PC-3 (cell line): ENCODE measurements at regions of chr18 and their contacts with region 1.

Region 1: DNA sequence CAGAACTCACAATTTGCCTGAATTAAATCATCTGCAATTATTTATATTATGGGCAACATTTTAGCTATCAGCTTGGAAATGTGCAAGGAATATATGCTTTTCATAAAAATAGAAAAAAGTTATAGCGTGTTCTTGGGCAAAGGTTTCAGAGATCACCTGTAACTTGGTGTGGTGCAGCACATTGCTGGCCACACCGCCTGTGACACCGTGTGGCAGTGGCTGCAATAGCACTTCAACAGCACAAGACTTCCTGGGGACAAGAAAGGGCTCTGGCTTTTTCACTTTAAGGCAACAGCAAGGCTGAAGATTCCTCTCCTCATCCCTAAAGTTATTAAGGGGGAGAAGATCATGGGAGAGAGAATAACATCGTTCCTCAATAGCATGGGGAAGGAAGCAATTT is 14.8 kb upstream of the SERPINB3 start:
- DNase-seq: peak; percentile 71
- ATAC-seq: peak; percentile 70
- H3K4me3 ChIP-seq: no peak overlapping the region
- H3K27ac ChIP-seq: peak overlapping the region; percentile 73
- H3K4me1 ChIP-seq: peaks cover 37% of the 10 kb centered on the region
- H3K27me3 ChIP-seq: no peaks in the 10 kb centered on the region
- CTCF ChIP-seq: peak; percentile 88

Region 2: GRCh38 chr18:63518178-63519012 is 158.1 kb before region 1 on chr18:
- CTCF ChIA-PET with region 1: interaction called, 12 read pairs
- POLR2A ChIA-PET with region 1: interaction called, 4 read pairs
- intact Hi-C with region 1: loop called (anchors 1 kb)
- DNase-seq: peak; percentile 91
- ATAC-seq: peak; percentile 97
- H3K4me3 ChIP-seq: no peak overlapping the region
- H3K27ac ChIP-seq: no peak overlapping the region
- H3K4me1 ChIP-seq: peaks cover 8% of the 10 kb centered on the region; the same call in 1 of the 2 replicates
- H3K27me3 ChIP-seq: no peaks in the 10 kb centered on the region
- CTCF ChIP-seq: peak; percentile 76

Region 3: GRCh38 chr18:63562284-63562683 is 114.2 kb before region 1 on chr18:
- CTCF ChIA-PET with region 1: no interaction called
- POLR2A ChIA-PET with region 1: no interaction called
- intact Hi-C with region 1: no loop called
- DNase-seq: no peak
- ATAC-seq: no peak
- H3K4me3 ChIP-seq: no peak overlapping the region
- H3K27ac ChIP-seq: no peak overlapping the region
- H3K4me1 ChIP-seq: no peaks in the 10 kb centered on the region
- H3K27me3 ChIP-seq: no peaks in the 10 kb centered on the region
- CTCF ChIP-seq: no peak

Region 4: DNA sequence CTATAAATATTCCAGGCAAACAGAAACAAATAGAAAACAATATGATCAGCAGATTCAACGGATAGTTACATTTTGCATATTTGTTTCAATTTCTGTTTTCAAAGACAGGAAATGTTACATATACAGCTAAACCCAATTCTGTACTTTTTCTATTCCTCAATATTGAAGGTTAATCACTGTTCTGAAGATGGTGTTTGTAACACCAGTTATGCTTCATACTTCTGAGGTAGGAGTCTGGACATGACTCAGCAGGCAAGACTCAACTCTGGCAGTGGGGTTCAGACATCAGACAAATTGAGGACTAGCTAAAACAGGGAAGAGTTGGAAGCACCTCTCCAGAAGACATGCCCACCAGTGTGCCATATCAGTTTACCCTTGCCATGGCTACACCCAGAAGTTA is 72.8 kb before region 1 on chr18:
- CTCF ChIA-PET with region 1: interaction called, 3 read pairs
- POLR2A ChIA-PET with region 1: no interaction called
- intact Hi-C with region 1: loop called (anchors 1 kb)
- DNase-seq: peak; percentile 38
- ATAC-seq: no peak
- H3K4me3 ChIP-seq: no peak overlapping the region
- H3K27ac ChIP-seq: peak overlapping the region; percentile 96
- H3K4me1 ChIP-seq: peaks cover 26% of the 10 kb centered on the region
- H3K27me3 ChIP-seq: no peaks in the 10 kb centered on the region
- CTCF ChIP-seq: no peak